Left colon (tissue), 2 donors: ENCODE measurements at regions of chr9 and their contacts with region 1.

Region 1: GRCh38 chr9:69056191-69056815 is 20.8 kb downstream of the FXN start:
- DNase-seq: no peak
- ATAC-seq: no peak

Region 2: GRCh38 chr9:69190086-69190862 is 134.0 kb after region 1 on chr9:
- intact Hi-C with region 1: loop called (anchors 2 to 5 kb)
- DNase-seq: no peak
- ATAC-seq: no peak

Region 3: GRCh38 chr9:69532396-69532795 is 476.1 kb after region 1 on chr9:
- intact Hi-C with region 1: loop called in 1 of 2 experiments (anchors 10 kb)
- DNase-seq: no peak
- ATAC-seq: no peak